A549 (cell line): ENCODE measurements at regions of chr6 and their contacts with region 1.

Region 1: DNA sequence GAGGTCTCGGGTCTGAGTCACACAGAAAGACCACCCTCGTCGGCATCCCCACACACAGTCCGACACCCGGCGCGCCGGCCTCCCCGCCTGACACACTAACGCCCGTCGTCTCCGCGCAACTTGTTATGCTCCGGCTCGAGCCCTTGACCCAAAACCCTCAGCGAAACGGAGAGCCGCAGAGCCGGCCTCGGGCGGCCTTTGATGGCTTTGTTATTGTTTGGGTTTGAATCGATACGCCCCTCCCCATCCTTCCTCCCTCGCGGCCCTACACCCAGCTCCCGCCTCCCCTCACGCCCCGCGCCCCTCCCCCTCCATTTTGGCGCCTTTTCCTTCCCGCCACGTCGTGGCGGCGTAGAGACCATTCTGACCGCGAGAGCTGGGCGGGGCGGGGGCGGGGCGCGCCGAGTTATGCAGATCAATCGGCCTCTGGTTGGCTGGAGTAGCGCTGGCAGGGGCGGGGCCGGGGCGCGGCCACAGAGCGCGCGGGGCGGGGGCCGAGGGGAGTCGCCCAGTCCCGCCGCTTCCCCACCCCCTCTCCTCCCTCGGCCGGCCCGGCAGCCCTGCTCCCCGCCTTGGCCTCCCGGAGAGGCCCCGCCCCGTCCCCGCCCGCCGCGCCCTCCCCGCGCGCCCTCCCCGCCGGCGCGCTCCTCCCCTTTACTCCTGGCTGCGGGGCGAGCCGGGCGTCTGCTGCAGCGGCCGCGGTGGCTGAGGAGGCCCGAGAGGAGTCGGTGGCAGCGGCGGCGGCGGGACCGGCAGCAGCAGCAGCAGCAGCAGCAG is at the start of gene PIM1:
- DNase-seq: peak; percentile 85 to 96
- ATAC-seq: peak; percentile 77
- H3K4me3 ChIP-seq: peak within 1 kb of the TSS; percentile 92
- H3K27ac ChIP-seq: peak within 1 kb of the TSS; percentile 94 to 97
- H3K4me1 ChIP-seq: peaks cover 21% of the 10 kb centered on the region
- CTCF ChIP-seq: no peak
- EP300 ChIP-seq: no peak
- POLR2A ChIP-seq: peak; percentile 56
- RAD21 ChIP-seq: 0 out of 5 replicates have a peak, but pooled peaks of 1 of the 2 experiments have one; percentile 7
- polyA plus RNA-seq, gene PIM1: 19.0 and 21.9 TPM in 2 replicates

Region 2: DNA sequence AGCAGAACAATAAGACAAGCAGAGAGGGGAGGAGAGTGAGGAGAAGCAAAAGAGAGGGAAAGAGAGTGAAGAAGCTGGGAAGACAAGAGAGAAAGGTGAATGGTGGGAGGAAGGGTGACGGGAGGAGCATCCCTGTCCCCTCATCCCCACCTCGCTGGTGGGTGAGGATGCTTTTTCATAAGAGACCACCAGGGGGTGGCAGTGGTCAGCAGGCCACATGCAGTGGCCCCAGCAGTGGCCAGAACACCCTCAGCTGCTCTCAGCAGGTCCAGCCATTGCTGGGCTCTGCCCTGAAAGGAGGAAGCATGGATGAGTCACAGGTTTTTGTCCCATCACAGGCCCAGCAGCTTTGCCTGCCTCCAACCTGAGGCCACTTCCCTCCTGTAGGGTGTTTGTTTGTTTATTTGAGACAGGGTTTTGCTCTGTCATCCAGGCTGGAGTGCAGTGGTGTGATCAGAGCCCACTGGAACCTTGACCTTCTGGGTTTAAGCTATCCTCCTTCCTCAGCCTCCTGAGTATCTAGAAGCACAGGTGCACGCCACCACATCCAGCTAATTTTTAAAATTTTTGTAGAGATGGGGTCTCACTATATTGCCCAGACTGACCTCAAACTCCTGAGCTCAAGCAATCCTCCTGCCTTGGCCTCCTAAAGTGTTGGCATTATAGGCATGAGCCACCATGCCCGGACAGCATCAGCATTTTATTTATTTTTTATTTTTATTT is 140.3 kb before region 1 on chr6:
- CTCF ChIA-PET with region 1: interaction called, 228 read pairs
- POLR2A ChIA-PET with region 1: no interaction called
- DNase-seq: peak; percentile 63 to 88
- ATAC-seq: peak; percentile 88 to 91
- H3K4me3 ChIP-seq: no peak overlapping the region
- H3K27ac ChIP-seq: peak overlapping the region in 1 of 2 experiments; percentile 66; a peak in 3 of 6 replicates
- H3K4me1 ChIP-seq: peaks cover 18% of the 10 kb centered on the region
- CTCF ChIP-seq: peak; percentile 59
- EP300 ChIP-seq: no peak
- POLR2A ChIP-seq: no peak
- RAD21 ChIP-seq: peak; percentile 69 to 78

Region 3: DNA sequence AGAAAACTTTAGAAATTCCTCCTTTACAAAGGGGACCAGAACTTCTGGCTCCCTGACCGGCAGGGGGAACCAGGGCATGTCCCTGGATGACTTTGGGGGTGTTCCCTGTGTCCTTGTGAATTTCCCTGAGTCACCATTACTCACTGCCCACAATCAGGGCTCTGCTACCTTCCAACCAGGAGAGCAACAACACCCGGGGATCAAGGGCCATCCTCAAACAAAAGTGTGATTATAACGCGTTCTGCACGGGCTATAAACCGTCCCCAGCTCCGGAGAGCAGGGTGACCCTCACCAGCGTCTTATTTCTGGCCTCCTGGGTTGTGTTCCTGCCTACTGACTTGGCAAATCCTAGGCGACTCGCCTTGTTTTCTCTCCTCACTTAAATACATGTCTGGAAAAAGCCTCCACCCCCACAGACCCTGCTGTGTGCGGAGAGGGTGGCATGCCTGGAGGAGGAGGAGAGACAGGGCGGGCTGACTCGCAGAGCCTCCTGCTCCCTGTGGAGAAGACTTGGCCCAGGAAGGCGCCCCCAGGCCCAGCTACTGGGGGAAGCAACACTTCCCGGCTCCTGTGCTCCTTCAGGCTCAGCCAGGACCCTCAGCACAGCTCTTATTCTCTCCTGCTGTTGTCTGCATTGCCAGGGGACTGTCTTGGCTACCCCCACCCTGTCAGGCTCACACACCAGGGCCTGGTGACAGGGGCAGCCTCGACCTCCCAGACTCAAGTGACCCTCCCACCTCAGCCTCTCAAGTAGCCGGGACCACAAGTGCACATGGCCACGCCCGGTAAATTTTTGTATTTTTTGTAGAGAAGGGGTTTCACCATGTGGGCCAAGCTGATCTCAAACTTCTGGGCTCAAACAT is 110.1 kb before region 1 on chr6:
- CTCF ChIA-PET with region 1: interaction called, 449 read pairs
- POLR2A ChIA-PET with region 1: interaction called, 13 read pairs
- DNase-seq: peak; percentile 89 to 95
- ATAC-seq: peak; percentile 88 to 91
- H3K4me3 ChIP-seq: peak overlapping the region; percentile 8; the same call in 1 of the 3 replicates
- H3K27ac ChIP-seq: peak overlapping the region; percentile 100
- H3K4me1 ChIP-seq: peaks cover 62% of the 10 kb centered on the region
- CTCF ChIP-seq: peak; percentile 63
- EP300 ChIP-seq: peak in 1 of 2 experiments; percentile 40; a peak in 1 of 5 replicates
- POLR2A ChIP-seq: peak; percentile 11; the same call in 1 of the 2 replicates
- RAD21 ChIP-seq: peak; percentile 71 to 81

Region 4: GRCh38 chr6:37131104-37131959 is 38.4 kb before region 1 on chr6:
- CTCF ChIA-PET with region 1: interaction called, 64 read pairs
- POLR2A ChIA-PET with region 1: interaction called, 24 read pairs
- DNase-seq: peak; percentile 37 to 88
- ATAC-seq: peak; percentile 41 to 57
- H3K4me3 ChIP-seq: peak overlapping the region; percentile 23; the same call in 1 of the 3 replicates
- H3K27ac ChIP-seq: peak overlapping the region; percentile 83 to 93
- H3K4me1 ChIP-seq: peaks cover 87% of the 10 kb centered on the region
- CTCF ChIP-seq: no peak
- EP300 ChIP-seq: no peak
- POLR2A ChIP-seq: no peak
- RAD21 ChIP-seq: peak in 1 of 2 experiments; percentile 7; a peak in 1 of 5 replicates

Region 5: GRCh38 chr6:37182736-37183590 is 13.3 kb after region 1 on chr6:
- CTCF ChIA-PET with region 1: interaction called, 29 read pairs
- POLR2A ChIA-PET with region 1: no interaction called
- DNase-seq: no peak
- ATAC-seq: no peak
- H3K4me3 ChIP-seq: no peak overlapping the region
- H3K27ac ChIP-seq: no peak overlapping the region
- H3K4me1 ChIP-seq: no peaks in the 10 kb centered on the region
- CTCF ChIP-seq: no peak
- EP300 ChIP-seq: no peak
- POLR2A ChIP-seq: no peak
- RAD21 ChIP-seq: no peak

Region 6: GRCh38 chr6:37207903-37208456 is 38.3 kb after region 1 on chr6:
- CTCF ChIA-PET with region 1: interaction called, 47 read pairs
- POLR2A ChIA-PET with region 1: interaction called, 3 read pairs
- DNase-seq: peak; percentile 76 to 83
- ATAC-seq: peak; percentile 84 to 91
- H3K4me3 ChIP-seq: no peak overlapping the region
- H3K27ac ChIP-seq: no peak overlapping the region
- H3K4me1 ChIP-seq: peaks cover 29% of the 10 kb centered on the region
- CTCF ChIP-seq: peak; percentile 63
- EP300 ChIP-seq: no peak
- POLR2A ChIP-seq: no peak
- RAD21 ChIP-seq: peak; percentile 61 to 67

Region 7: GRCh38 chr6:37314487-37315156 is 144.9 kb after region 1 on chr6:
- CTCF ChIA-PET with region 1: no interaction called
- POLR2A ChIA-PET with region 1: no interaction called
- DNase-seq: peak; percentile 22 to 38
- ATAC-seq: peak; percentile 78 to 86; a peak in 5 of 6 replicates
- H3K4me3 ChIP-seq: no peak overlapping the region
- H3K27ac ChIP-seq: no peak overlapping the region
- H3K4me1 ChIP-seq: no peaks in the 10 kb centered on the region
- CTCF ChIP-seq: peak; percentile 48
- EP300 ChIP-seq: no peak
- POLR2A ChIP-seq: no peak
- RAD21 ChIP-seq: peak; percentile 36 to 57; a peak in 4 of 5 replicates

Region 8: GRCh38 chr6:37761554-37762263 is 592.0 kb after region 1 on chr6:
- CTCF ChIA-PET with region 1: no interaction called
- POLR2A ChIA-PET with region 1: no interaction called
- DNase-seq: no peak
- ATAC-seq: no peak
- H3K4me3 ChIP-seq: no peak overlapping the region
- H3K27ac ChIP-seq: no peak overlapping the region
- H3K4me1 ChIP-seq: no peaks in the 10 kb centered on the region
- CTCF ChIP-seq: no peak
- EP300 ChIP-seq: no peak
- POLR2A ChIP-seq: no peak
- RAD21 ChIP-seq: no peak